Esophagus muscularis mucosa (tissue), 4 donors: ENCODE measurements at regions of chr15 and their contacts with region 1.

Region 1: GRCh38 chr15:83248151-83249029 is 36.1 kb downstream of the BNC1 start:
- DNase-seq: no peak
- H3K4me3 ChIP-seq: no peak overlapping the region
- H3K27ac ChIP-seq: no peak overlapping the region
- H3K4me1 ChIP-seq: peaks cover 0 to 5% (median 2%) of the 10 kb centered on the region in 4 donors
- H3K27me3 ChIP-seq: peaks cover 0 to 41% (median 0%) of the 10 kb centered on the region in 4 donors
- CTCF ChIP-seq: peak; percentile 91 to 97 (median 92)
- EP300 ChIP-seq: no peak
- POLR2A ChIP-seq: no peak

Region 2: GRCh38 chr15:83379574-83379973 is 131.2 kb after region 1 on chr15:
- intact Hi-C with region 1: loop called (anchors 5 kb)
- DNase-seq: no peak
- H3K4me3 ChIP-seq: no peak overlapping the region
- H3K27ac ChIP-seq: no peak overlapping the region
- H3K4me1 ChIP-seq: peaks cover 0 to 9% (median 8%) of the 10 kb centered on the region in 4 donors
- H3K27me3 ChIP-seq: peaks cover 0 to 74% (median 15%) of the 10 kb centered on the region in 4 donors
- CTCF ChIP-seq: no peak
- EP300 ChIP-seq: no peak
- POLR2A ChIP-seq: no peak

Region 3: GRCh38 chr15:83436458-83437158 is 188.2 kb after region 1 on chr15:
- intact Hi-C with region 1: loop called (anchors 2 kb)
- DNase-seq: peak; percentile 80
- H3K4me3 ChIP-seq: no peak overlapping the region
- H3K27ac ChIP-seq: no peak overlapping the region
- H3K4me1 ChIP-seq: no peaks in the 10 kb centered on the region
- H3K27me3 ChIP-seq: peaks cover 0 to 20% (median 0%) of the 10 kb centered on the region in 4 donors
- CTCF ChIP-seq: peak; percentile 7 to 22 (median 22)
- EP300 ChIP-seq: no peak
- POLR2A ChIP-seq: no peak